ENCODE measurements at regions of chr22 and their contacts with region 1.

Region 1: DNA sequence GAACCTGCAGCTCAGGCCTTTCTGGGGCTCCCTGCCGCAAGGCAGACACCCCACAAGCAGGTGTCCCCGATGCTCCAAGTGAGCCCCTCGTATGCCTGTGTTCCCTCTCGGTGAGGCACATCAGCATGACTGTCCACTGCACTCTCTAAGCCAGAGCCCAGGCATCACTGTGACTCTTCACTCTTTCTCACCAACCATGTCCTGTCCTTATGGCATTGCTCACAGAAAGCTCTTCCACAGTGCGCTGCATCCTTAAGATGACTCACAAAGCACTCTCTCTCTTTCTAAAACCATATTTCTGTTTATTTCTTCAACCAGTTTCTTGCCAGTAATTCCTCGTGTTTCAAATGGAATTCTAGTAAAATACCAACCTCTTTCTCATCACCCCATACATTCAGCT is 18.1 kb downstream of the GAB4 start:
- DNase-seq: no peak
- H3K4me3 ChIP-seq: no peak overlapping the region
- H3K4me1 ChIP-seq: no peaks in the 10 kb centered on the region
- H3K27me3 ChIP-seq: no peaks in the 10 kb centered on the region

Region 2: GRCh38 chr22:16953206-16954059 is 36.5 kb before region 1 on chr22:
- in situ Hi-C with region 1: loop called (anchors 5 kb)
- DNase-seq: no peak
- H3K4me3 ChIP-seq: no peak overlapping the region
- H3K4me1 ChIP-seq: no peaks in the 10 kb centered on the region
- H3K27me3 ChIP-seq: no peaks in the 10 kb centered on the region

Region 3: GRCh38 chr22:17047656-17048055 is 57.7 kb after region 1 on chr22:
- in situ Hi-C with region 1: loop called (anchors 10 kb)
- DNase-seq: no peak
- H3K4me3 ChIP-seq: no peak overlapping the region
- H3K4me1 ChIP-seq: no peaks in the 10 kb centered on the region
- H3K27me3 ChIP-seq: peaks cover 5% of the 10 kb centered on the region; the same call in 1 of the 2 replicates

Region 4: GRCh38 chr22:17171313-17172171 is 181.6 kb after region 1 on chr22:
- in situ Hi-C with region 1: no loop called
- DNase-seq: peak; percentile 81 to 95
- H3K4me3 ChIP-seq: peak overlapping the region; percentile 48
- H3K4me1 ChIP-seq: peaks cover 4% of the 10 kb centered on the region
- H3K27me3 ChIP-seq: no peaks in the 10 kb centered on the region

Measured in HAP-1 (cell line).